Adrenal gland (tissue), 19 donors: ENCODE measurements at regions of chr18 and their contacts with region 1.

Region 1: GRCh38 chr18:47870605-47871004 is 59.9 kb downstream of the SMAD2 start:
- DNase-seq: no peak
- H3K4me3 ChIP-seq: no peak overlapping the region
- H3K27ac ChIP-seq: no peak overlapping the region
- H3K4me1 ChIP-seq: peaks cover 0 to 18% of the 10 kb centered on the region in 2 donors
- H3K27me3 ChIP-seq: no peaks in the 10 kb centered on the region
- CTCF ChIP-seq: no peak
- POLR2A ChIP-seq: no peak

Region 2: DNA sequence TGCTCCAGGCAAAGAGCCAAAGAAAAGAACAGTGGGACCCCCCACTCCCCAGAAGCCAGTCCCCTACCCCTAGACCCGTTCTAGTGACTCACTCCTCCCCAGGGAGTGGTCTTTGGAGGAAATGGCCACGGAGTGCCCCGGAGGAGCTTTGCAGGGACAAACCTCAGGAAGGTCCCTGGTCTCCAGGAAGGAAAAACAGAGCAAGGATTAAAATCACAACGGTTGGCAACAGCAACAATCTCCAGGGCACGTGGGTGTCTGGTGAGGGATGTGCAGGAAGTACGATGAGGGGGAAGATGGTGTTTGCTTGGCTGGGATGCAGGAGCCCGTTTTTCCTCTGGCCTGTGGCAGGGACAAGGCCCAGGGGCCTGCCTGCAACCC is 75.2 kb before region 1 on chr18:
- intact Hi-C with region 1: no loop called
- DNase-seq: no peak
- H3K4me3 ChIP-seq: no peak overlapping the region
- H3K27ac ChIP-seq: no peak overlapping the region
- H3K4me1 ChIP-seq: no peaks in the 10 kb centered on the region
- H3K27me3 ChIP-seq: no peaks in the 10 kb centered on the region
- CTCF ChIP-seq: no peak
- POLR2A ChIP-seq: no peak

Region 3: GRCh38 chr18:47929681-47930198 is 59.1 kb after region 1 on chr18:
- intact Hi-C with region 1: loop called in 1 of 2 experiments (anchors 10 kb)
- DNase-seq: peak in 3 of 7 donors; percentile 20 to 46 (median 39)
- H3K4me3 ChIP-seq: peak overlapping the region; percentile 73 to 100 (median 84)
- H3K27ac ChIP-seq: peak overlapping the region; percentile 73 to 100 (median 94)
- H3K4me1 ChIP-seq: peaks cover 22 to 37% of the 10 kb centered on the region in 2 donors
- H3K27me3 ChIP-seq: no peaks in the 10 kb centered on the region
- CTCF ChIP-seq: no peak
- POLR2A ChIP-seq: no peak